A549 (cell line): ENCODE measurements at regions of chr7 and their contacts with region 1.

Region 1: GRCh38 chr7:25894902-25895791 is 256.9 kb upstream of the NFE2L3 start:
- DNase-seq: peak; percentile 42 to 75
- ATAC-seq: peak; percentile 88 to 94
- H3K4me3 ChIP-seq: peak overlapping the region; percentile 22
- H3K27ac ChIP-seq: peak overlapping the region in 1 of 2 experiments; percentile 4; a peak in 3 of 6 replicates
- H3K4me1 ChIP-seq: peaks cover 6% of the 10 kb centered on the region; the same call in 1 of the 3 replicates
- CTCF ChIP-seq: peak; percentile 61
- EP300 ChIP-seq: no peak
- POLR2A ChIP-seq: no peak
- RAD21 ChIP-seq: peak in 1 of 2 experiments; percentile 24; a peak in 2 of 5 replicates

Region 2: GRCh38 chr7:25877802-25878789 is 17.1 kb before region 1 on chr7:
- CTCF ChIA-PET with region 1: interaction called, 52 read pairs
- POLR2A ChIA-PET with region 1: no interaction called
- DNase-seq: no peak
- ATAC-seq: no peak
- H3K4me3 ChIP-seq: no peak overlapping the region
- H3K27ac ChIP-seq: no peak overlapping the region
- H3K4me1 ChIP-seq: no peaks in the 10 kb centered on the region
- CTCF ChIP-seq: no peak
- EP300 ChIP-seq: no peak
- POLR2A ChIP-seq: no peak
- RAD21 ChIP-seq: no peak

Region 3: DNA sequence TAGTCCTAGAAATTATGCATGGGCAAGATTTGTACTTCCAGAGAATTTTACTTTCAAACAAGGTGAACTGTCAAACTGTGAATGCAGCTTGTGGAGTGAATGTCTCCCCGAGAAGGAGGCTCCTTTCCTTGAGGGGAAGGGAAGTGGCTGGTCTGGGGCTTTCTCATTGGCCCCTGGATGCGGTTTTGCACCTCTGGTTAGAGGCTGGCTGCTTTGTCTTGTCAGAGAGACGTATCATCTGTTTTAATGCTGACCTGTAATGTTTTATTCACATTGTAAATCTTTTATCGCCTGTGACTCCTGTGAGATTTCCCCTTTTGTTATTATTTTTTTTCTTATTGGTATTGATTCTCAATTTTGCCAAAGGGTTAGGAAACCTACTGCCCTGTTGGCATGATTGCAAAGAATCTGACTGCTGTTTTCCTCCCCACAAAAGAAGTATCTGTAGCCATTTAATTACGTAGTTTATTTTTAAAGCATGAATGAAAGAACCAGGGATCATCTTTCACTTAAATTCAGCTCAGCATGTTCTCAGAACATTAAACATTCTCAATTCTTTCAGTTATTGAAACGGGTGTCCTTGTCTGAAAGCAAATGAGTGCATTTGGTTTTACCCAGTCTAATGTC is 18.6 kb after region 1 on chr7:
- CTCF ChIA-PET with region 1: interaction called, 42 read pairs
- POLR2A ChIA-PET with region 1: no interaction called
- DNase-seq: no peak
- ATAC-seq: no peak
- H3K4me3 ChIP-seq: no peak overlapping the region
- H3K27ac ChIP-seq: no peak overlapping the region
- H3K4me1 ChIP-seq: no peaks in the 10 kb centered on the region
- CTCF ChIP-seq: no peak
- EP300 ChIP-seq: no peak
- POLR2A ChIP-seq: no peak
- RAD21 ChIP-seq: no peak

Region 4: DNA sequence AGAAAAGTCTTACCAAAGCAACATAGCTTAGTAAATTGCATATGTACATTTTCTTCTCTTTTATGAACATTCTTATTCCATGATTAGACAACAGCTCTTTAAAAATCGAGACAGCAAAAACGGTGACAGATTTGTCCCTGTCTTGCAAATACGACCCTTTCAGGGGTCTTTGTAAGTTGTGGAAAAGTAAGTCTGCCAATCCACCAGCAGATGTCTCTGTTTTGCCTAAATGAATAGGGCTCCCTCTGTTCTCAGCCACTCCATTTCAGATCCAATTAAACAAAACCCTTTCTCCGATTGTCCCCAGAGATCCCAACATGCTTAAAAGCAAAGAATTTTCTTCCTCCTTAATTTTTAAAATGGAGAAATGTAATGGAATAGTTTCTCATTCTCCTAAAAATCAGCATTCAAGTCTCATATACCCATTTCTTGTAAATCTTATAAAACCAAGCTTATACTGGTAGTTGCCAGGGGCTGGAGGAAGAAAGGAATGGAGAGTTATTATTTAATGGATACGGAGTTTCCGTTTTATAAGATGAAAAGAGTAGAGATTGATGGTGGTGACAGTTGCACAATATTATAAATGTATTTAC is 195.9 kb after region 1 on chr7:
- CTCF ChIA-PET with region 1: interaction called, 26 read pairs
- POLR2A ChIA-PET with region 1: no interaction called
- DNase-seq: peak; percentile 45 to 64
- ATAC-seq: peak; percentile 68 to 87; a peak in 5 of 6 replicates
- H3K4me3 ChIP-seq: no peak overlapping the region
- H3K27ac ChIP-seq: no peak overlapping the region
- H3K4me1 ChIP-seq: no peaks in the 10 kb centered on the region
- CTCF ChIP-seq: peak; percentile 87
- EP300 ChIP-seq: no peak
- POLR2A ChIP-seq: no peak
- RAD21 ChIP-seq: peak; percentile 78 to 80

Region 5: GRCh38 chr7:26356929-26357798 is 462.0 kb after region 1 on chr7:
- CTCF ChIA-PET with region 1: interaction called, 154 read pairs
- POLR2A ChIA-PET with region 1: no interaction called
- DNase-seq: no peak
- ATAC-seq: no peak
- H3K4me3 ChIP-seq: no peak overlapping the region
- H3K27ac ChIP-seq: no peak overlapping the region
- H3K4me1 ChIP-seq: no peaks in the 10 kb centered on the region
- CTCF ChIP-seq: no peak
- EP300 ChIP-seq: no peak
- POLR2A ChIP-seq: no peak
- RAD21 ChIP-seq: no peak

Region 6: DNA sequence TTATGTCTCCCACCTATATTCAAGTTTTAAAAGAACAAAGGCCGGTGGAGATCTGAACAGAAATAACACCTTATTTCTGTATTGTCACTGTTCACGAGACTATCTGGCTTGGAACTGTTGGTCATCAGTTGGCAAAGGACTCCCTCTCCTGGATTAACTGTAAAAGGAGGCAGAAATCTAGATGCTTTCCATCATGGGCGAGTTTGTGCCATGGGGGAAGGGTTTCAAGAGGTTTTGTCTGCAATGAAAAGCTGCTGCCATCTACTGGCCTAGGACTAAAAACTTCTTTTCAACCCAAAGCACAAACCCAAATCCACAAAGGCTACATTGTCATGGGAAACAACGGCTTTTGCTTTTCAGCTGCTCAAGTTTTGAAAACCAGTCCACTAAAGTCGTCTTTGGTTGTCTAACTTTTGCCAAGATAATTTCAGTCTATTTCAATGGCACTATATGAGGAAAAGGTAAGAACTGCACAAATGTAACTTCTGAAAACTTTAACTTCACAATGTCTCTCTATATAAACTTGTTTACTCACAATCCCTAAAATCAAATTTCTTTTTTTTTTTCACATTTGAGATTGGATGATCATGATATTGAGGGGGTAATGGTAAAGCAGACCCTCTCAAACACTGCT is 772.5 kb after region 1 on chr7:
- CTCF ChIA-PET with region 1: interaction called, 32 read pairs
- POLR2A ChIA-PET with region 1: no interaction called
- DNase-seq: peak; percentile 47 to 94
- ATAC-seq: peak; percentile 99 to 100
- H3K4me3 ChIP-seq: no peak overlapping the region
- H3K27ac ChIP-seq: no peak overlapping the region
- H3K4me1 ChIP-seq: 0 out of 3 replicates have a peak, but pooled peaks cover 4% of the 10 kb centered on the region
- CTCF ChIP-seq: peak; percentile 98
- EP300 ChIP-seq: no peak
- POLR2A ChIP-seq: no peak
- RAD21 ChIP-seq: peak; percentile 90 to 97